ENCODE measurements at regions of chr18 and their contacts with region 1.

Region 1: GRCh38 chr18:10194605-10195004 is 259.8 kb upstream of the APCDD1 start:
- DNase-seq: no peak
- ATAC-seq: peak in 1 of 4 donors; percentile 15
- H3K4me3 ChIP-seq: no peak overlapping the region
- H3K27ac ChIP-seq: no peak overlapping the region
- H3K4me1 ChIP-seq: peaks cover 0 to 28% (median 3%) of the 10 kb centered on the region in 12 donors
- H3K27me3 ChIP-seq: no peaks in the 10 kb centered on the region
- CTCF ChIP-seq: no peak
- POLR2A ChIP-seq: no peak

Region 2: GRCh38 chr18:10131460-10132395 is 62.9 kb before region 1 on chr18:
- intact Hi-C with region 1: loop called in 1 of 10 experiments (anchors 10 kb)
- DNase-seq: peak in 4 of 5 donors; percentile 23 to 43 (median 34)
- ATAC-seq: peak; percentile 37 to 74 (median 70)
- H3K4me3 ChIP-seq: peak overlapping the region in 11 of 12 donors; percentile 15 to 50 (median 44)
- H3K27ac ChIP-seq: peak overlapping the region in 6 of 12 donors; percentile 10 to 69 (median 42)
- H3K4me1 ChIP-seq: peaks cover 0 to 25% (median 17%) of the 10 kb centered on the region in 12 donors
- H3K27me3 ChIP-seq: peaks cover 0 to 12% (median 0%) of the 10 kb centered on the region in 9 donors
- CTCF ChIP-seq: no peak
- POLR2A ChIP-seq: no peak

Region 3: DNA sequence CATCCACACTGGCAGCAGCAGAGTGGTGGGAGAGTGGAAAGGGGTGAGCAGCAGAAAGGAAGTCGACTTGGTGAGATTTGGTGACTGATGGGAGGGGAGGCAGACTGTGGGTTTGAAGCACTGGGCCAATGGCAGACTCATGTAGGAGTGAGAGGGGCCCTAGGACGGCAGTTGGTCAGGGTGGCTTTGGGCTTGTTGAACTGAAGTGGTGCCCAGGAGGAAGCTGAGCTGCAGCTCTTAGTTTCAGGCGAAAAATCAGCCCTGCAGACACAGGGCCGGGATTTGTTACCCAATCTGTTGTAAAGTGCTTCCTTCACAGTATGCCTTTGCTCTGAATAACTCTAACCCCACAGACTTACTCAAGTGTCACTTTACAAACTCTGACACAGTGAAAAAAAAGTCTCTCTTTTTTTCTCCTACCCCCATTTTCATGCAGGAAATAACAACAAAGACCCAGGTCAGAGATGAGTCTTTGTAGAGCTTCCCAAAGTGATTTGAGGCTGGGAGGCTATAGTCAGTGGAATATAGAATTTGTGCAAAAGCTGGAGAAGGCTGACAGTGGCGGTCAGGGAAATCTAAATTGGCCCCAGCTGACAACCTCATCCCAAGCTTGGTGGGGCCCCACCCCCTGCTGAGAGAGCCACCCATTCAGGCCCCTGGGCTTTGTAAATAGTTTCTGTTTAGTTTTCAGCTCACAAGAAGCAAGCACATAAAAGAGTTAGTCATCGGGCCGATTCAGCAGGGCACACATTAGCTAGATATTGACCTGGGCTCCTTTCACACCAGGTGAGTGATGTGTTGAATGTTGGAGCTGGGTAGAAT is 53.9 kb before region 1 on chr18:
- intact Hi-C with region 1: loop called in 2 of 10 experiments (anchors 5 to 10 kb)
- DNase-seq: no peak
- ATAC-seq: no peak
- H3K4me3 ChIP-seq: no peak overlapping the region
- H3K27ac ChIP-seq: no peak overlapping the region
- H3K4me1 ChIP-seq: peaks cover 0 to 27% (median 13%) of the 10 kb centered on the region in 12 donors
- H3K27me3 ChIP-seq: no peaks in the 10 kb centered on the region
- CTCF ChIP-seq: no peak
- POLR2A ChIP-seq: no peak

Measured in heart left ventricle (tissue), 16 donors.